Naive thymus-derived CD8-positive, alpha-beta T cell (primary cell): ENCODE measurements at regions of chr12 and their contacts with region 1.

Region 1: GRCh38 chr12:21657326-21658077 is at the start of gene LDHB:
- DNase-seq: peak; percentile 82 to 96 (median 90)
- ATAC-seq: peak; percentile 93 to 94
- H3K4me3 Mint-ChIP-seq: peak within 1 kb of the TSS; percentile 89 to 100 (median 99)
- H3K27ac Mint-ChIP-seq: peak within 1 kb of the TSS; percentile 94 to 99 (median 98)
- H3K4me1 Mint-ChIP-seq: peaks cover 29 to 61% (median 56%) of the 10 kb centered on the region in 4 donors
- H3K27me3 Mint-ChIP-seq: no peaks in the 10 kb centered on the region
- polyA plus RNA-seq, gene LDHB: 1,691 to 2,368 (median 2,237) TPM

Region 2: GRCh38 chr12:21501379-21501956 is 156.0 kb before region 1 on chr12 and contains the starts of genes GOLT1B and RECQL:
- POLR2A ChIA-PET with region 1: interaction called, 20 read pairs
- DNase-seq: peak; percentile 62 to 95 (median 92)
- ATAC-seq: peak; percentile 94 to 97
- H3K4me3 Mint-ChIP-seq: no peak within 1 kb of the TSS
- H3K27ac Mint-ChIP-seq: no peak within 1 kb of the TSS
- H3K4me1 Mint-ChIP-seq: peaks cover 21 to 58% (median 46%) of the 10 kb centered on the region in 4 donors
- H3K27me3 Mint-ChIP-seq: no peaks in the 10 kb centered on the region
- polyA plus RNA-seq, gene GOLT1B: 16.6 to 19.7 (median 19.2) TPM
- polyA plus RNA-seq, gene RECQL: 51.4 to 64.6 (median 52.9) TPM

Region 3: GRCh38 chr12:21613931-21614330 is 43.6 kb before region 1 on chr12:
- POLR2A ChIA-PET with region 1: interaction called, 47 read pairs
- DNase-seq: no peak
- ATAC-seq: no peak
- H3K4me3 Mint-ChIP-seq: peak overlapping the region in 8 of 10 donors; percentile 21 to 77 (median 60)
- H3K27ac Mint-ChIP-seq: peak overlapping the region; percentile 65 to 98 (median 93)
- H3K4me1 Mint-ChIP-seq: peaks cover 25 to 60% (median 58%) of the 10 kb centered on the region in 4 donors
- H3K27me3 Mint-ChIP-seq: no peaks in the 10 kb centered on the region

Region 4: GRCh38 chr12:21642707-21643389 is 14.7 kb before region 1 on chr12:
- POLR2A ChIA-PET with region 1: interaction called, 22 read pairs
- DNase-seq: no peak
- ATAC-seq: peak; percentile 30 to 41
- H3K4me3 Mint-ChIP-seq: peak overlapping the region in 8 of 10 donors; percentile 17 to 70 (median 48)
- H3K27ac Mint-ChIP-seq: peak overlapping the region in 8 of 10 donors; percentile 4 to 83 (median 62)
- H3K4me1 Mint-ChIP-seq: peaks cover 44 to 84% (median 80%) of the 10 kb centered on the region in 4 donors
- H3K27me3 Mint-ChIP-seq: no peaks in the 10 kb centered on the region

Region 5: DNA sequence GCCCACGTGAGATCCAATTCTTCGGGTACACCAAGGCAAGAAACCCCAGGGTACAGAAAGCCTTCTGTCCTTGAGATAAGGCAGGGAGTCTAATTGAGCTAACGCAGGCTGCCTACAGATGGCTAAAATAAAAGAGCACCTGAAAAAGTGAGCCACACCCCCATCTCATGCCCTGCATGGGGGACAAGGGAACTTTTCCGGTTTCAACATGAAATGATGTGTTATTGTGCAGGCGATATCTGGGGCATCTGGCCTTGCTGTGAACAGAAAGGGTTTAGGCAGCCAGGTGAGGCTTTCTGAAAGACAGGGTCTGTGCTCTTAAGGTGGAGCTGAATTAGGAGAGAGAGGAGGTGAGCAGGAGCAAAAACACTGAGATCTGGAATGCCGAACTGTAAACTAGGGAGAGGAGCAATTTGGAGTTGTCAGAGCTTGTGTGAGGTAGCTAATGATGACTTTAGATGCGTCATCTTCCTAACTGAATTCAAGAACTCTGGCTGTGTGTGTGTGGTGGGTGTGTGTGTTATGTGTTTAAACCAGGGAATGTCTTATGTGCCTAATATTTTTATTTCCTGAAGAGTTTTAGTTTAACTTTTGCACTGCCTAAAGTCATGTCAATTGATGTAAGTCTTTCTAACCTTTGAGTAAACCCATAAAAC is 20.2 kb after region 1 on chr12:
- POLR2A ChIA-PET with region 1: interaction called, 174 read pairs
- DNase-seq: peak in 5 of 10 donors; percentile 5 to 50 (median 33)
- ATAC-seq: peak; percentile 60 to 65
- H3K4me3 Mint-ChIP-seq: peak overlapping the region; percentile 68 to 91 (median 78)
- H3K27ac Mint-ChIP-seq: peak overlapping the region; percentile 9 to 98 (median 88)
- H3K4me1 Mint-ChIP-seq: peaks cover 34 to 57% (median 51%) of the 10 kb centered on the region in 4 donors
- H3K27me3 Mint-ChIP-seq: no peaks in the 10 kb centered on the region

Region 6: GRCh38 chr12:21751517-21751916 is 94.0 kb after region 1 on chr12:
- POLR2A ChIA-PET with region 1: no interaction called
- DNase-seq: no peak
- ATAC-seq: no peak
- H3K4me3 Mint-ChIP-seq: no peak overlapping the region
- H3K27ac Mint-ChIP-seq: no peak overlapping the region
- H3K4me1 Mint-ChIP-seq: no peaks in the 10 kb centered on the region
- H3K27me3 Mint-ChIP-seq: peaks cover 8 to 58% (median 23%) of the 10 kb centered on the region in 5 donors